ENCODE measurements at regions of chr6 and their contacts with region 1.

Region 1: DNA sequence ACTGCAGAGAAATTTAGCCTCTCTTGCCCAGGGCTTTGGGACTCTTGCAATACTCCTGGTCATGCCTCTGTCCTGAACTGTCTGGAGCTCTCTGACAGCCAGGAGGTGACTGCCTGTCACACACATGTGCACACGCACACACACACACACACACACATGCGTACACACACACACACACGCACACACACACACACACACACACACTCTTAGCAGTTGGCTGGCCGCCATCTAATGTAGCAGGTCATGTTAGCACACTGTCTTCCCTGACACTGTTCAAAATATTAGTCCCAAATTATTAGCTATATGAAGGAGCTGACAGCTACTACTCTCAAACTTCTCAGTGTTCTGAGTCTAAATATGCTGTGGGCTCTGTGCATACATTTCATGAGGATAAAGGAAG is 60.9 kb downstream of the IPCEF1 start:
- DNase-seq: no peak
- ATAC-seq: no peak
- H3K4me3 ChIP-seq: no peak overlapping the region
- H3K27ac ChIP-seq: no peak overlapping the region
- H3K4me1 ChIP-seq: peaks cover 17% of the 10 kb centered on the region
- H3K27me3 ChIP-seq: peaks cover 2 to 3% of the 10 kb centered on the region in 2 experiments; a peak in 2 of 5 replicates
- CTCF ChIP-seq: no peak
- EP300 ChIP-seq: no peak
- POLR2A ChIP-seq: no peak
- RAD21 ChIP-seq: no peak

Region 2: DNA sequence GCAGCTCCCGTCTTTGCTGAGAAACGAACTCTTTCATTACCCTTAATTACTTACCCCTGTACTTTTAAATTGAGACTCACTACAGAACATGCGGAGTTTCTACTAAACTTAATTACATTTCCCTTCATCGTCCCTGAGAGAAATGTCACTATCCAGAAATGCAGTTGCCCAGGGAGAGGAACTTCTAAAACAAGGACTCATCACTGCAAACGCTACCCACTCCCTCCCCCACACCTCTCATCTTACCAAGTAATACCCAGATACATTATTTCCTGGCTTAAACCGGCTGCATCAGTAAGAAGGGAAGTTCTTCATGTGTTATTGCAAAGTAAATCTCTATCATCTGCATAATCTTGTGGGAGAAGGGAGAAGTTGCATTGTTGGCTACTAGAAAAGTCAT is 77.4 kb before region 1 on chr6:
- CTCF ChIA-PET with region 1: no interaction called
- POLR2A ChIA-PET with region 1: no interaction called
- in situ Hi-C with region 1: no loop called
- intact Hi-C with region 1: no loop called
- DNase-seq: no peak
- ATAC-seq: no peak
- H3K4me3 ChIP-seq: no peak overlapping the region
- H3K27ac ChIP-seq: no peak overlapping the region
- H3K4me1 ChIP-seq: no peaks in the 10 kb centered on the region
- H3K27me3 ChIP-seq: peaks cover 0 to 15% of the 10 kb centered on the region in 2 experiments; a peak in 2 of 5 replicates
- CTCF ChIP-seq: no peak
- EP300 ChIP-seq: no peak
- POLR2A ChIP-seq: no peak
- RAD21 ChIP-seq: no peak

Region 3: DNA sequence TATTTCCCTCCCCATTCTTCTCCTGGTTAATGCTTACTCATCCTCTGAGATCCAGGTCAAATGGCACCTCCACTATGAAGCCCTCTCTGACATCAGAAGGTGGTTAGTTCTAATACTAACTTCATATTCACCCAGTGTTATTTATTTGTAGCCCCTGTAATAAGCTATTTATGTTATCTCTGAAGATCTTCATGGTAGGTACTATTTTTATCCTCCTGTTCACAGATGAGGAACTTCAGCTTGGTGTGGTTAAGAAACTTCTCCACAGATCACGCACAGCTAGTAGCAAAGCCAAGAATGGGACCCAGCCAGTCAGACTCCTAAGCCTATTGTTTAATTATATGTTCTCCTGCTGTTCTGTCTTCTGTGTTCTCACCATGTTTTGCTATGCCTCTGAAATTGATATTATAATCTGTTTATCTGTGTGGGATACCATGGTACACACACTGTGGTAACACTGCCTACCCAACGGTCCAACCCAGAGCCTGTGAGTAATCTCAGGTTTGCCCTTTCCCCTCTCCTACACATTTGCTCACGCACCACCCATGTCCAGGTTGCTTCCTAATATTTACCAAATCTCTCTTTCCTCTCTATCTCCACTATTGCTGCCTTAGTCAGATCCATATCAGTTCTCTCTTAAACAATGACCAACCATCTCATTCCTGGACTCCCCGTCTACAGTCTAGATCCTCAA is 37.5 kb before region 1 on chr6:
- CTCF ChIA-PET with region 1: no interaction called
- POLR2A ChIA-PET with region 1: no interaction called
- in situ Hi-C with region 1: no loop called
- intact Hi-C with region 1: no loop called
- DNase-seq: no peak
- ATAC-seq: no peak
- H3K4me3 ChIP-seq: no peak overlapping the region
- H3K27ac ChIP-seq: no peak overlapping the region
- H3K4me1 ChIP-seq: no peaks in the 10 kb centered on the region
- H3K27me3 ChIP-seq: no peaks in the 10 kb centered on the region
- CTCF ChIP-seq: no peak
- EP300 ChIP-seq: no peak
- POLR2A ChIP-seq: no peak
- RAD21 ChIP-seq: no peak

Region 4: GRCh38 chr6:154343473-154344308 is 48.0 kb after region 1 on chr6:
- CTCF ChIA-PET with region 1: no interaction called
- POLR2A ChIA-PET with region 1: no interaction called
- in situ Hi-C with region 1: no loop called
- intact Hi-C with region 1: loop called (anchors 1 kb)
- DNase-seq: no peak
- ATAC-seq: peak; percentile 88
- H3K4me3 ChIP-seq: no peak overlapping the region
- H3K27ac ChIP-seq: no peak overlapping the region
- H3K4me1 ChIP-seq: no peaks in the 10 kb centered on the region
- H3K27me3 ChIP-seq: peaks cover 4 to 6% of the 10 kb centered on the region in 2 experiments; a peak in 3 of 5 replicates
- CTCF ChIP-seq: peak; percentile 20; the same call in 1 of the 2 replicates
- EP300 ChIP-seq: no peak
- POLR2A ChIP-seq: no peak
- RAD21 ChIP-seq: no peak

Region 5: DNA sequence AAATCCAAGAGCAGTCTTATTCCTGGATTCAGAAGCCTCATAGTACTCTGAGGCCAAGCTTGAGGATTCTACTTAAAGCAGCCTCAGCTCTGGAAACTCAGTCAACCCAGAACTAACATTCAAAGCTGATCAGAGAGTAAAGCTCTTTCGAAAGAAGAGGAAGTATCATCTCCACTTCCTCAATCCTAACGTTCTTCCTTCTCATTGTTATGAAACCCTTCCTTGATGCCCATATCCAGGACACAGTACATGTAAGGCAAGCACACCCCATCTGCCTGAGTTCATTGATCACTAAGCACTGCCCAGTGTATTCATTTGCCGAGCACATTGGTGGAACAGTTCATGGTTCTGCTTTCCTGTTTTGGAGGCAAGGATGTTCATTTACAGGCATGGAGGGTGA is 61.0 kb after region 1 on chr6 and contains the start of gene IPCEF1:
- CTCF ChIA-PET with region 1: no interaction called
- POLR2A ChIA-PET with region 1: no interaction called
- in situ Hi-C with region 1: no loop called
- intact Hi-C with region 1: no loop called
- DNase-seq: no peak
- ATAC-seq: peak; percentile 60
- H3K4me3 ChIP-seq: no peak within 1 kb of the TSS
- H3K27ac ChIP-seq: no peak within 1 kb of the TSS
- H3K4me1 ChIP-seq: peaks cover 11% of the 10 kb centered on the region; the same call in 1 of the 2 replicates
- H3K27me3 ChIP-seq: no peaks in the 10 kb centered on the region
- CTCF ChIP-seq: no peak
- EP300 ChIP-seq: no peak
- POLR2A ChIP-seq: no peak
- RAD21 ChIP-seq: no peak
- total RNA-seq, gene IPCEF1: not detected in 2 replicates